ENCODE measurements at regions of chr1 and their contacts with region 1.

Region 1: DNA sequence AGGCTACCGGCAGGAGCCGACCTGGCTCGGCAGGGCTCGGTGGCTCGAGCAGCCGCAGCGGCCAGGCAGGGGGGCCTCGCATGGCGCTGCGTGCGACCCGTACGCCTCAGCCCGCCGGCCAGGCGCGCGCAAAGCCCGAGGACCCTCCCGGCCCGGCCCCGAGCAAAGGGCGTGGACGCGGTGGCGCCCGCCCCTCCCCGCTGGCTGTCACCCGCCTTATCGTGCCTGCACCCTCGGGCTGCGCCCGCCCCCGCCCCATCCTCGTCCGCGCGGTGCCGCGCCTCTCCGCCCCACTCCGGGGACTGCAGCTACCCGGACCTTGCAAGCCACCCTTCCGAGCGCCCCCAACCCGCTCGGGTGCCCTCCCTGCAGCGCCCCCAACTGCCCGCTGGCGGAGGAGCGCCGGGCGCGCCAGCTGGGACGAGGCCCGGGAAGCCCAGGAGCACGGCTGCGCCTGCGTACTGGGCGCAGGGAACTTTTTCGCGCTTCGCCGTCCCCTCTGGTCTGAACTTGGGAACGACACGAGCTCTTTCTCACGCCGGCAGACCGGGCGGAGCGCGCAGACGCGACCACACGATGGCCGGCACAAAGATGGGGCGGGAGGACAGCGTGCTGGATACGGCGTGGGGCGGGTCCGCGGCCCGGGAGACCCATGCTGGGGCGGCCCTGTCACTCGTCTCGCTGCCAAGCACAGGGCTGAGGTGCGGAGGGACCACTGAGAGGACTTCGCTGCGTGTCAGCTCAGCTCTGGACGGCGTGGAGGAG is at the start of gene ABCB10:
- H3K4me3 ChIP-seq: peak within 1 kb of the TSS; percentile 76
- H3K27ac ChIP-seq: peak within 1 kb of the TSS; percentile 98
- H3K4me1 ChIP-seq: peaks cover 17% of the 10 kb centered on the region
- CTCF ChIP-seq: peak; percentile 100

Region 2: DNA sequence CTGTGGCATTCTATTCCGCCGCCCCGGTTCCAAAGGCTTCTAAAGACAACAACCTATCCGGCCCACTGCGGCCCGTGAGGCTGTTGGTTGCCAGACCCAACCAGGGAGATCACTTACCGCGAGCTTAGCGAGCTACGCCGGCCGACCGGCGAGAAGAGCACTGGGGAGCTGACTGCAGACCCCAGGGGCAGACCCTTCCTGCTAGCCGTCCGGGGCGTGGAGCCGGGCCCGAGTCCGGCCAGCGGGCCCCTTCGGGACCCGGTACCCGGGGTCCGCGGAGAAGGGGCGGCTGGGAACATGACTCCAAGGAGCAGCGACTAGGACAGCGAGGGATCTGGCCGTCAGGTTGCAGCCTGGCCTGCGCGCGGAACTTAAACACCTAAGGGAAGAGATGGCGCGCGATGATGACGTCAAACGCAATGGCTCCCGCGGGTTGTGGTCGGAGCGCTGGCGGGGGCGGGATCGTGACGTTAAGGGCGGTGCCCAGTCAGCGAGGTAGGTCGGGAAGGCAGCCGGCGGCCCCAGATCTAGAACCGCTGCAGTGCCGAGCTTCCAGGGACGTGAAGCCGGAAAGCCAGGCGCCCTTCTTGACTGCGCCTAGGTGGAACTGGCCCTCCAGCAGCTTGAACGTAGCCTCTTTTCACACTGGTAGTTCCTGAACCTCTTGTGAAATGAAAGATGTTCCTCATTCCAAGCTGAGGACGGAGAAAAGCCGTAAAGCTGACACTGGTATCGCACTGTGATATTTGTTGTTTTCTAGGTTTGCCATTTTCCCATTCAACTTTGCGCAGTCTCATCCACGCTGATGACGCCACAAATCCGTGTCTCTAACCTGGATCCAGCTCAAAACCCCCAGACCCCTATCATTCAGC is 50.6 kb before region 1 on chr1 and contains the start of gene NUP133:
- CTCF ChIA-PET with region 1: interaction called, 4 read pairs
- POLR2A ChIA-PET with region 1: interaction called, 44 read pairs
- H3K4me3 ChIP-seq: peak within 1 kb of the TSS; percentile 96
- H3K27ac ChIP-seq: peak within 1 kb of the TSS; percentile 85
- H3K4me1 ChIP-seq: peaks cover 7% of the 10 kb centered on the region; the same call in 1 of the 2 replicates
- CTCF ChIP-seq: no peak

Region 3: DNA sequence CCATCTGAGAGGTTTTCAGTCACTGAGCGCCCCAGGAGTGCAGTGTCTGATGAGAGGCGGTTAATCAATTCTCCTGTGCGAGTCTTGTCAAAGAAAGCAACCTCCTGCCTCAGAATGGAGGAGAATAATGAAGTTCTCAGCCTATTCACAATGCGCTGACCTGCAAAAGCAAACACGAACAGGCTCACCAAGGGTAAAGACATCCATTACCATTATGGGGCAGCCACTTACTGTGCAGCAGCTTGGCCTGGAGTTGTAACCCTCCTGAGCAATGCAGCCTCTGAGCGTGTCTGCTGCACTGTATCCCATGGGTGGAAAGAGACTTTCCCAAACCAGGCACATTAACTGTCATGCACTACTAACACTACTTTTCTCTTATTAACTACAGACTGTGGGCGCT is 11.2 kb before region 1 on chr1:
- CTCF ChIA-PET with region 1: interaction called, 15 read pairs
- POLR2A ChIA-PET with region 1: interaction called, 11 read pairs
- H3K4me3 ChIP-seq: no peak overlapping the region
- H3K27ac ChIP-seq: no peak overlapping the region
- H3K4me1 ChIP-seq: peaks cover 19% of the 10 kb centered on the region
- CTCF ChIP-seq: no peak

Region 4: DNA sequence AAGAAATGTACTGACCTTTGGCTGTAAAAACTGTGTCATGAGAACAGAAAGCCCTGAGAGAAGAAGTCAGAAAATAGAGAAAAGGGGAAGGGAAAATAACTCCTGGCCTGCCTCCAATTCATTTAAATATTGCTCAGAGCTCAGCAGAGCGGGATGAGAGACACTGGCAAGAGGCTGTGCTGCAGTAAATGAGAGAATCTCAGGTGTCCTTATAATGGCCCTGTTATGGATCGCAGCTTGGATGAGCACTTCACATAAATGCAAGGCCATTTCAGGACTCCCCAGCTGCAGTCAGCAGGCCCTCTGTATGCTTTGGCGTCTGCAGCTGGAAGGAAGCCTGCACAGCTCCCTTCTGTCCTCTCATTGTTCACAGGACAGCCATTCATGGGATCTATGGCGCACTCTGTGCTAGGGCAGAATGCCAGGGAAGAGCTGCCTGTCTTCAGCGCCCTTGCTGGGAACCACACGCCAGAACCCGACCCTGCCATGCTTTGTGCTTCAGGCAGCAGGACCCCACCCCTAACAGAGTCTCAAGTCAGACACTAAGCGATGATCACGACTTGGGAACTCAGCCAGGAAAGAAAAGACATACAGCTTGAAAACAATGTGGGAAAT is 20.4 kb after region 1 on chr1:
- CTCF ChIA-PET with region 1: interaction called, 15 read pairs
- POLR2A ChIA-PET with region 1: interaction called, 13 read pairs
- H3K4me3 ChIP-seq: no peak overlapping the region
- H3K27ac ChIP-seq: peak overlapping the region; percentile 48; the same call in 1 of the 2 replicates
- H3K4me1 ChIP-seq: peaks cover 9% of the 10 kb centered on the region
- CTCF ChIP-seq: no peak

Region 5: GRCh38 chr1:229625915-229626831 is 67.4 kb after region 1 on chr1 and contains the starts of genes TAF5L and URB2:
- CTCF ChIA-PET with region 1: interaction called, 26 read pairs
- POLR2A ChIA-PET with region 1: interaction called, 102 read pairs
- H3K4me3 ChIP-seq: peak within 1 kb of the TSS; percentile 91
- H3K27ac ChIP-seq: peak within 1 kb of the TSS; percentile 82
- H3K4me1 ChIP-seq: peaks cover 6% of the 10 kb centered on the region; the same call in 1 of the 2 replicates
- CTCF ChIP-seq: peak; percentile 55; the same call in 1 of the 2 replicates